ENCODE measurements at regions of chr6 and their contacts with region 1.

Region 1: GRCh38 chr6:56652994-56653393 is 10.3 kb upstream of the DST start:
- DNase-seq: no peak
- H3K4me3 ChIP-seq: no peak overlapping the region
- H3K27ac ChIP-seq: peak overlapping the region; percentile 60
- H3K4me1 ChIP-seq: peaks cover 19% of the 10 kb centered on the region
- H3K27me3 ChIP-seq: no peaks in the 10 kb centered on the region
- CTCF ChIP-seq: no peak

Region 2: DNA sequence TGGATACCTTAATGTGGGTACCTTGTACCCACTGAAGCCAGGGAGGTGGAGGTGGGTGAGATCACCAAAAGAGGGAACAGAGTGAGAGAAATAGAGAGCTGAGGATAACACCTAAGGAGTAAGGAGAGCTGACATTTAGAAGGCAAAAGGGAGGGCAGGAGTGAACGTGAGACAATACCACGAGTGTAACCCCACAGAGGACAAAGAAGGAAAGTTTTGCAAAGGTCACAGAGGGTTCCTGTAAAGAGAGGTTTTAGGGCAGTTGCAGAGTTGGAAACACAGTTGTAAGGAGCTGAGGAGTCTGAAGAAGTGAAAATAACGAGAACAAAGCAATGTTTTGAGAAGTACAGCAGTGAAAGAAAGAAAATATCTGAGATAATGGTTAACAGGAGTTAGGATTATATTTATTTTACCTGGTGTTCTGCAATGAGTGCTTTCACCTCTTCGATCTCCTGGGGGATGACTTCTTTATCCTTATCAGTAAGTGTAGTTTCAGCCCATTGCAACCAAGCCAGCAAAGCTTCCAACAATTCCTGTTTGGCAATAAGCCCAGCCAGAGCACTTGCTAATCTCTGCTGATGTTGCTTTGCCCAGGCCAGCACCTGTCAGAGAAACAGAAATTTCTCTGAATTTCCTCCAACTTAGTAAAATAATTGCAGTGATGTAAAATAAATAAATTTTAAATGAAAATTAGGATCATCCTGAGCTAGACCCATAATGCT is 177.1 kb before region 1 on chr6:
- intact Hi-C with region 1: no loop called
- DNase-seq: peak; percentile 29
- H3K4me3 ChIP-seq: no peak overlapping the region
- H3K27ac ChIP-seq: no peak overlapping the region
- H3K4me1 ChIP-seq: no peaks in the 10 kb centered on the region
- H3K27me3 ChIP-seq: no peaks in the 10 kb centered on the region
- CTCF ChIP-seq: no peak

Region 3: GRCh38 chr6:56689114-56689513 is 36.1 kb after region 1 on chr6:
- intact Hi-C with region 1: loop called (anchors 2 kb)
- DNase-seq: no peak
- H3K4me3 ChIP-seq: peak overlapping the region; percentile 4
- H3K27ac ChIP-seq: peak overlapping the region; percentile 82
- H3K4me1 ChIP-seq: peaks cover 3% of the 10 kb centered on the region
- H3K27me3 ChIP-seq: no peaks in the 10 kb centered on the region
- CTCF ChIP-seq: no peak

Region 4: DNA sequence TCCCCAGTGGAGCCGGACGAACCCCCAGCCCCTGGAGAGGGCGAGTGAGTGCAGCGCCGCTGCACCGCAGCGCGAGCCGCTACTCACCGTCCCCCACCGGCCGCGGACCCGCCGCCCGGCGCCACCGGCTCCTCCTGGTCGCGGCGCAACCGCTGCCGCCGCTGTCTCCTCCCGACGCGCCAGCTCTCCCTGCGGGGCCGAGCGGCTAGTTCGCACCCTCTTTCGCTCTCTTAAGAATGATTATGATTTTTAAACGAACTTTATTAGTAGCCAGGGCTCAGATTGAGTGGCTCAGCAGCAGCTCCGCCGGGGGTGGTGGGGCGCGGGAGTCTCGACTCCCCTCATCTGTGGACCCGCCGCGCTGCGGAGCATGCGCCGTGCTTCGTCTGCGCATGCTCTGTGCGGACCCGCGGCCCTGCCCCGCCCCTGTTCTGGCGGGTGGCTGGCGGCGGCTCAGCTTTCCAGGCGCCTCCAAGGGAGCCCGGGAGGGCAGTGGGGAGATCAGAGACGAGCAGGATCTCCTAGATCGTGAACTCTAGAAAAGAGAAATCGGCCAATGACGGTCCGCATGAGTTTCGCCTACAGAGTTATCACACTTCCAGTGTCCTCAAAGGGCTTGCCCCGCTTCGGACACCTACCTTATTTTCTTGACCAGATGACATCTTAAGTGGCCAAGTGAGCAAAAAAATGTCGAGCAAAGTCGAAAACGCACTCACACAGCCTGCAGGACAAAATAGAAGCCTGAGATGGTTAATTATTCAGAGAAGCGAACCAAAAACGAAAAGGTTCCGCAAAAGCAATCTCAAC is 569.1 kb after region 1 on chr6 and contains the start of gene RAB23:
- intact Hi-C with region 1: loop called (anchors 5 kb)
- DNase-seq: peak; percentile 82
- H3K4me3 ChIP-seq: peak within 1 kb of the TSS; percentile 99
- H3K27ac ChIP-seq: peak within 1 kb of the TSS; percentile 90
- H3K4me1 ChIP-seq: peaks cover 1% of the 10 kb centered on the region
- H3K27me3 ChIP-seq: no peaks in the 10 kb centered on the region
- CTCF ChIP-seq: peak; percentile 14
- total RNA-seq, gene RAB23: 6.3 to 21.1 TPM